Activated B cell treated with CpG ODN at 0.5 μM for 24 hours (primary cell): ENCODE measurements at regions of chr10 and their contacts with region 1.

Region 1: GRCh38 chr10:117167789-117168674 is 29.3 kb upstream of the KCNK18 start:
- DNase-seq: peak; percentile 54
- ATAC-seq: peak; percentile 75
- H3K4me3 Mint-ChIP-seq: no peak overlapping the region
- H3K27ac Mint-ChIP-seq: no peak overlapping the region
- H3K4me1 Mint-ChIP-seq: peaks cover 7% of the 10 kb centered on the region
- H3K27me3 Mint-ChIP-seq: peaks cover 67% of the 10 kb centered on the region
- CTCF ChIP-seq: no peak

Region 2: GRCh38 chr10:116796910-116797513 is 371.0 kb before region 1 on chr10:
- CTCF ChIA-PET with region 1: interaction called, 17 read pairs
- POLR2A ChIA-PET with region 1: interaction called, 7 read pairs
- intact Hi-C with region 1: loop called (anchors 1 kb)
- DNase-seq: peak; percentile 31
- ATAC-seq: no peak
- H3K4me3 Mint-ChIP-seq: no peak overlapping the region
- H3K27ac Mint-ChIP-seq: no peak overlapping the region
- H3K4me1 Mint-ChIP-seq: no peaks in the 10 kb centered on the region
- H3K27me3 Mint-ChIP-seq: peaks cover 6% of the 10 kb centered on the region
- CTCF ChIP-seq: no peak

Region 3: DNA sequence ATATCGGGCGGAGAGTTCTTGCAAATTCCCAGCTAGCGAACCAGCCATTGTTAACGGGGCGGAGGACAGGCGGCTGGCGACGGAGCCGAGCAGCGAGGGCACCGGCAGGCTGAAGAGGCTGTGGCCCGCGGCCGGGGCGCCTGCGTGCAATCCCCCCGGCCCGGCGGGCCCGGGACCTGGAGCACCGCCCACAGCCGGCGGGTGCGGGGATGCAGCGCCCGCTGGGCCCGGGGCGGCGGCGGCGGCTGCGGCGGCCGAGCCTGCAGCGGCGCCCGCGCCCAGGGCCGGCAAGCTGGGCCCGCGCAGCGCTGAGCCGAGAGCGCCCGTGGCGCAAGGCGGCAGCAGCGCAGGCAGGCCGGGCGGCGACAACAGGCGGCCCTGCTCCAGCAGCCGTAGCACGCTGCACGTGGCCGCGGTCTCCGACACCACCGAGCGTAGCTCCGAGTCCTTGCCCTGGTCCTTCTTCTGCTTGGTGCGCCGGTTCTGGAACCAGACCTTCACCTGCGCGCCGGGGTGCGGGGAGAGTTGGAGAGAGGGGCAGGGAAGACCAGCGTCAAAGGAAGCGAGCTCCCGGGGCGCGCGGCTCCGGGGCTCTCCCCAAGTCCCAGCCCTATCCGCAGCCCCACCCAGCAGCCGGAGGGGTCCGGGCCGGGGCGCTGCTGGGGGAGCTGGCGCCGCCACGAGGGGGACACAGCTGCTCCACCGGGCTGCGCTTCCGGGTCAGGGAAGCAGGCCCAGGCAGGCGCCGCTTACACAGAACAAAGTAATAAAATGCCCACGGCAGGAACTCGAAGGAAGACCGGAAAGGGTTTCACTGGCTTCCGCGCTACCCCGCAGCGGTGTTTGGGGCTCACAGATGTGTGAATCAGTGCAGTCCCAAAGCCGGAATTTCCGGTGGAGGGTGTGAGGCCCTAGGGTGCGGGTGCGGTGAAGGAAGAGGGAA is 33.7 kb before region 1 on chr10:
- CTCF ChIA-PET with region 1: interaction called, 3 read pairs
- POLR2A ChIA-PET with region 1: no interaction called
- intact Hi-C with region 1: loop called (anchors 2 kb)
- DNase-seq: no peak
- ATAC-seq: no peak
- H3K4me3 Mint-ChIP-seq: no peak overlapping the region
- H3K27ac Mint-ChIP-seq: no peak overlapping the region
- H3K4me1 Mint-ChIP-seq: peaks cover 20% of the 10 kb centered on the region
- H3K27me3 Mint-ChIP-seq: peaks cover 71% of the 10 kb centered on the region
- CTCF ChIP-seq: no peak

Region 4: DNA sequence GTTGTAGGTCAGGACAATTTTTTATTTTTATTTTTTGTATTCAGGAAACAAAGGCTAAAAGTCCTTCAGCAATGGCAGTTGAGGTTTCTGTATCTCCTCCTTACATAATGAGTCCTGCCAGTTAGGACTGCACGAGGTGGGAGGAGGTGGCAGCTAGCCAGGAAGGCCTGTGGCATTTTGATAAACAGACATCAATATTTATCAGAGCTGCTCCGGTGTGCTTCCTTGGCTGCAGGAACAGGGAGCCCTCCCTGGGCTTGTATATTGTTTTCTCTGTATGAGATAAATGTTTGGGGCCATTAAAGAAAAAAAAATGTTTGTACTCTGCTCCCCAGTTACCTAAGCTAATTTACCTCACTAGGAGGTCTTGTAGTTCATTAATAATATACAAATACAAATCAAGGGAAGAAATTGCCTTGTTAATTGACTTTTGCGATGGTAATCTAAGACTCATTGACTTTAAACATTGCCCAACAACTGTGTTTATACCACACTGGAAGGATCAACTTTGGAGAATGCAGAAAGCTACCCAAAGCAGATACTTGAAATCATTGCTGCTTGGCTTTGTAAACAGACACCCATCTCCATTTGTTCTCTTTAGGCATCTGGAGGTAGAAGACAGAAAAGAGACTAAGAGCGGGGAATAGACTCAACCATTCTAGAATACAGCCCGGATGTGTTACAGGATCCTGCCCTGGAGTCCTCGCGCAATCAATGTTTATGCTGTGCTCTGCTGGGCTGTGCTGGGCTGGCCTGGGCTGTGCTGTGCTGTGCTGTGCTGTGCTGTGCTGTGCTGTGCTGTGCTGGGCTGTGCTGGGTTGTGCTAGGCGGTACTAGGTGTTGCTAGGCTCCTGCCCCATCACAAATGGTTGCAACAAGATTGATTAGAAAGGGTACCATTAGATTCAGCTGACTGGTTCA is 243.7 kb after region 1 on chr10:
- CTCF ChIA-PET with region 1: no interaction called
- POLR2A ChIA-PET with region 1: no interaction called
- intact Hi-C with region 1: no loop called
- DNase-seq: no peak
- ATAC-seq: no peak
- H3K4me3 Mint-ChIP-seq: no peak overlapping the region
- H3K27ac Mint-ChIP-seq: no peak overlapping the region
- H3K4me1 Mint-ChIP-seq: no peaks in the 10 kb centered on the region
- H3K27me3 Mint-ChIP-seq: peaks cover 17% of the 10 kb centered on the region
- CTCF ChIP-seq: no peak

Region 5: DNA sequence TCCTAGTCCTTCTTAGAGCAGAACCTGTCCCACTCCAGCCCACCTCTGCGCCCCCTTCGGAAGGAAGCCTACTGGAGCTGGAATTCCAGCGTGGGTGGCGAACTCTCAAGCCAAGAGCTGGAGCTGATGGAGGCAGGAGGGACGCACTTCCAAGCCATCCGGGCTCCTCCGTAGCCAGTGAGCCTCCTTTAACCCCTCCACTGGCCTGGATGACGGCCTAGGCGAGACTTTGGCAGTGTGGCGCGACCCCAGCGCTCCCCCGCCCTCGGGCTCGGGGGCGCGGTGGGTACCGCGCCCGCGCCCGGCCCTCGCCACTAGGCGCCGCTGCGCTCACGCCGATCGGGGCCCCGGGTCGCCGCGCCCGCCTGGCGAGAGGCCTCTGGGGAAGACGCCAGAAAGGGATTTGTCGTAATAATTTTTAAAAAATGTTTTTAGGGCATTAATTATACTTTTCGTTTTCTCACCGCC is 369.4 kb after region 1 on chr10:
- CTCF ChIA-PET with region 1: no interaction called
- POLR2A ChIA-PET with region 1: no interaction called
- intact Hi-C with region 1: loop called (anchors 5 kb)
- DNase-seq: no peak
- ATAC-seq: no peak
- H3K4me3 Mint-ChIP-seq: no peak overlapping the region
- H3K27ac Mint-ChIP-seq: no peak overlapping the region
- H3K4me1 Mint-ChIP-seq: peaks cover 6% of the 10 kb centered on the region
- H3K27me3 Mint-ChIP-seq: peaks cover 51% of the 10 kb centered on the region
- CTCF ChIP-seq: no peak